Mammary epithelial cell (primary cell): ENCODE measurements at regions of chr2 and their contacts with region 1.

Region 1: GRCh38 chr2:72915907-72916742 is 1.2 kb upstream of the EMX1 start:
- DNase-seq: peak; percentile 57
- H3K4me3 ChIP-seq: peak overlapping the region; percentile 27 to 37 (median 31)
- H3K27ac ChIP-seq: no peak overlapping the region
- H3K4me1 ChIP-seq: peaks cover 38% of the 10 kb centered on the region
- H3K27me3 ChIP-seq: peaks cover 74% of the 10 kb centered on the region
- CTCF ChIP-seq: no peak

Region 2: DNA sequence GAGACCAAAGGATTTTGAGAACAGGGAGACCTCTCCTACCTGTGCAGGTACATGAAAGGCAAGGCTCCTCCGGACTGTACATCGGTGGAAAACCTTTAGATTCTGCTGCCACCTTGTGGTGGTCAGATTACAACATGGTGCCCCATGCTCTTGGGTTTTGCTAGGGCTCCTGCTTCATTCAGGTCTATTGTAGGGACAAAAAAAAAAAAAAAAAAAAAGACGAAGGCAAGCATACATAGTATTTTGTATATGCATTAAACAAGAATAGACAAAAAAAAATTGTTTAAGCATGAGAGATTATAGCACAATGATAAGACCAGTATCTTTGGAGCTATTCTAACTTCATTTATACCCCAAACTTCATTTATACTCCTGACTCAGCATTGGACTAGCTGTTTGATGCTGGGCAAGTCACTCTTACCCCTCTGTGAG is 56.3 kb before region 1 on chr2:
- CTCF ChIA-PET with region 1: no interaction called
- dilution Hi-C with region 1: no loop called
- in situ Hi-C with region 1: no loop called
- intact Hi-C with region 1: no loop called
- DNase-seq: peak; percentile 75
- H3K4me3 ChIP-seq: no peak overlapping the region
- H3K27ac ChIP-seq: no peak overlapping the region
- H3K4me1 ChIP-seq: peaks cover 14% of the 10 kb centered on the region
- H3K27me3 ChIP-seq: no peaks in the 10 kb centered on the region
- CTCF ChIP-seq: peak; percentile 77 to 79

Region 3: DNA sequence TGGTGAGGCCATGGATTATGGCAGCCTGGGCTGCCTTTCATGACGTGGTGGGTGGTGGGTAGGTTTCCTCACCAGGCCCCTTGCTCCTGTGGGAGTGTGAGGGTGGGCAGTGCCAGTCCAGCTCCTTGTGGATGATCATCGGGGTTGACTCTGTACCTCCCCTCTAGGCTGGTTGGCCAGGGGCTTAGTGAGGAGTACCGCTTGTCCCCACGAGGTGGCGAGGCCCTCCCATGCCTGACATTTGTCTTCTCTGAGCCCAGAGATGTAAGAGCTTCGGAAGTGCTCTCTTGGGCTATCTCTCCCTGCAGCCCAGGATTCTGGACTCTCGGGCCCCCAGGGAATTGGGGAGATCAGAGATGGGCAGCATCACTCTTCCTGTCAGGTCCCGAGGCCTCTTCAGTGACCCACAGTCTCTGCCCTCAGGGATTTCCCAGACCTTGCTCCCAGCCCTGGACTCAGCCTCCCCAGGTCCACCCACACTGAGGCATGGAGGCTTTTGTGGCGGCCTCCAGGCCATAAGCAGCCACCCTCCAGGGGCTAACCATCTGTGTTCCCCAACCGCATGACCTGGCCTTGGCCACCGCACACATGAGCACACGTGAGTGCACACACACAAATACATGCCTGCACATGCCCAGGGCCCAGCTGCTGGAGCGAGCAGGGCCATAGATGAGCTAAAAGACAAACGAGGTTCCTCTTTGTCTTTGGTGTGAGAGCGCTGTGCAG is 22.4 kb before region 1 on chr2:
- CTCF ChIA-PET with region 1: interaction called, 5 read pairs
- dilution Hi-C with region 1: no loop called
- in situ Hi-C with region 1: no loop called
- intact Hi-C with region 1: loop called (anchors 2 kb)
- DNase-seq: peak; percentile 49
- H3K4me3 ChIP-seq: no peak overlapping the region
- H3K27ac ChIP-seq: no peak overlapping the region
- H3K4me1 ChIP-seq: peaks cover 26% of the 10 kb centered on the region
- H3K27me3 ChIP-seq: no peaks in the 10 kb centered on the region
- CTCF ChIP-seq: peak; percentile 81 to 87